Aorta (tissue), 5 donors: ENCODE measurements at regions of chr10 and their contacts with region 1.

Region 1: DNA sequence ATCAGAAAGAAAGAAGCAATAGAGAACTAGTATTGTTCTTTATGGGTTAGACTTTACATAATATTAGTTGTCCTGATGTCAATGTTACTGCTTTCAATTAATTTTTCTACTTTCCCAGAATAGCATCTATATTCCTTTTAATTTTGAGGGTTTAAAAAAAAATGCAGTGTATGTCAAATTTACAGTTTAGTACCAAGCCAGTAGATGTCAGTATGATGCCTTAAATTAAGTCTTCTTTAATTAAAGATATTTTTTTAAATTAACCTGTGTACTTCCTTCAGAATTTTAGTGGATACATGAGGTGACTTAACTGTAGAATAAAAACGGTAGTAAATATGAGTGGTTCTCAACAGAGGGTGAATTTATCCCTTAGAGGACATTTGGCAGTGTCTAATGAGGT is 35.2 kb upstream of the STOX1 start:
- DNase-seq: no peak
- ATAC-seq: no peak
- H3K4me3 ChIP-seq: no peak overlapping the region
- H3K27ac ChIP-seq: no peak overlapping the region
- H3K4me1 ChIP-seq: no peaks in the 10 kb centered on the region
- H3K27me3 ChIP-seq: no peaks in the 10 kb centered on the region

Region 2: DNA sequence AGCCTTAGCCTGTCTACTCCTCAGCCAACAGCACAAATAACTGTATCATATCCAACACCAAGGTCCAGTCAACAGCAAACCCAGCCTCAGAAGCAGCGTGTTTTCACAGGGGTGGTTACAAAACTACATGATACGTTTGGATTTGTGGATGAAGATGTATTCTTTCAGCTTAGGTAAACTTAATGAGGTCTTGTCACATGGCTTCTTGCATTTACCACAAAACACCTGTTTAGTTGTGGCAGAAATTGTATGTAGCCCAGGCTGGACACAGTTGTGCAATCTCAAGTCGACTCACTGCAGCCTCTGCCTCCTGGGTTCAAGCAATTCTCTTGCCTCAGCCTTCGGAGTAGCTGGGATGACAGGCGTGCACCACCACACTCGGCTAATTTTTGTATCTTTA is 49.7 kb before region 1 on chr10:
- intact Hi-C with region 1: no loop called
- DNase-seq: no peak
- ATAC-seq: no peak
- H3K4me3 ChIP-seq: no peak overlapping the region
- H3K27ac ChIP-seq: no peak overlapping the region
- H3K4me1 ChIP-seq: no peaks in the 10 kb centered on the region
- H3K27me3 ChIP-seq: no peaks in the 10 kb centered on the region

Region 3: DNA sequence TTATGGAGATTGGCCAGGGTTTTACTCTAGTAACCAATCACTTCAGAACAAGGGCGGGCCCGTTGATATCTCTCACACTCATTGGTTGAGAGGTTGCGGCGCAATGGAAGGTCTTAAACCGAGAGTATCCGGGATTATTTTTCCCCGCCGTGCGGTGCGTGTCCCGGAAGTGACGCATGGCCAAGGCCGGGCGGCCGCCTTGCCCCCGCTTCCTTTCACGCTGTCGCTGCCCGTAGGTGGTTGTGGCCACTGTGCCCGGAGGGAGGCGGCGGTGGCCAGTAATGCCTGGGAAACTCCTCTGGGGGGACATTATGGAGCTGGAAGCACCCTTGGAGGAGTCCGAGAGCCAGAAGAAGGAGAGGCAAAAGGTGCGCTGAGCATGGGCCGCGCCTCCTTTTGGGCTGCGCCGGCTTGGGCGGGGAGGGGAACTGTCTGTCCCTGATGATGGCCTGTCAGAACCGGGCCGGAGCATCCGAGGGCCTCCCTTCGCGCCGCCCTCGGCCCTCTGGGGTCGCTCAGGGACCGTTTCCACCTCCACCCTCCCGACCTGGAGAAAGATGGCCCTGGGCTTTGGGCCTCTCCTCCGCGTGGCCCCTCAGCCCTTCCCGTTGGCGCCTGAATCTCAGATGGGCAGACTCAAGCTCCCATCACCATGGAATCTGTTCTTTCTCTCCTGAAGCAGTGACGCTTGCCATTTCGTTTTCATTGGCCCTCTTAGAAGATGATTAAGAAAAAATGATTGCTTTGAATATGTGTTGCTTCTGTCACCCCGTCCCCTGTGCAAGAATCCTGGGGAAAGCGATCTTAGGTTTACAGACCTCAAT is 109.2 kb after region 1 on chr10 and contains the start of gene DDX50:
- intact Hi-C with region 1: loop called in 1 of 2 experiments (anchors 5 kb)
- DNase-seq: peak; percentile 98
- ATAC-seq: peak; percentile 99
- H3K4me3 ChIP-seq: peak within 1 kb of the TSS; percentile 44 to 60
- H3K27ac ChIP-seq: peak within 1 kb of the TSS; percentile 70 to 84
- H3K4me1 ChIP-seq: no peaks in the 10 kb centered on the region
- H3K27me3 ChIP-seq: no peaks in the 10 kb centered on the region
- total RNA-seq, gene DDX50: 32.0 to 36.5 TPM